Right cardiac atrium (tissue), 5 donors: ENCODE measurements at regions of chr2 and their contacts with region 1.

Region 1: DNA sequence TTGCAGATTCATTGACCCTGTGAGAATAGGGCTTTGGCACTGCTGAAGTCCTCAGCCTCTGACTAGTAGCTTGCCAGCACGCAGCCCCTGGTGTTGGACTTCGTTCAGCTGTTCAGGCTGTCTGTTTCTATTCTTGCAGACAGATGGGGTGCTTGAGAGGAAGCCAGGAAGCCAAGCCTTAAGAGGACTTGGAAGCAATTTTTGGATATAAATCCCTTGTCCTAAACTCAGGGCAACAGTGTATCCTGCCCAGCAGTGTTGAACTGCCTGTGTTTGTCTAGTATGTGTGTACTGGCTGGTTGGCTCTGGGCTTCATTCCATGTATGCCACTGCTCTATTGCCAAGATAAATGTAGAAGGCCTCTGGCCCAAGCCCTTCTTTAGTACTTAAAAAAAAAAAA is 108.6 kb downstream of the COMMD1 start:
- DNase-seq: peak; percentile 73 to 90 (median 83)
- ATAC-seq: peak; percentile 97 to 99
- H3K4me3 ChIP-seq: no peak overlapping the region
- H3K27ac ChIP-seq: peak overlapping the region; percentile 15
- H3K4me1 ChIP-seq: peaks cover 4% of the 10 kb centered on the region
- H3K27me3 ChIP-seq: no peaks in the 10 kb centered on the region

Region 2: GRCh38 chr2:61926531-61927477 is 87.3 kb before region 1 on chr2:
- intact Hi-C with region 1: no loop called
- DNase-seq: no peak
- ATAC-seq: no peak
- H3K4me3 ChIP-seq: no peak overlapping the region
- H3K27ac ChIP-seq: no peak overlapping the region
- H3K4me1 ChIP-seq: peaks cover 4% of the 10 kb centered on the region
- H3K27me3 ChIP-seq: no peaks in the 10 kb centered on the region

Region 3: DNA sequence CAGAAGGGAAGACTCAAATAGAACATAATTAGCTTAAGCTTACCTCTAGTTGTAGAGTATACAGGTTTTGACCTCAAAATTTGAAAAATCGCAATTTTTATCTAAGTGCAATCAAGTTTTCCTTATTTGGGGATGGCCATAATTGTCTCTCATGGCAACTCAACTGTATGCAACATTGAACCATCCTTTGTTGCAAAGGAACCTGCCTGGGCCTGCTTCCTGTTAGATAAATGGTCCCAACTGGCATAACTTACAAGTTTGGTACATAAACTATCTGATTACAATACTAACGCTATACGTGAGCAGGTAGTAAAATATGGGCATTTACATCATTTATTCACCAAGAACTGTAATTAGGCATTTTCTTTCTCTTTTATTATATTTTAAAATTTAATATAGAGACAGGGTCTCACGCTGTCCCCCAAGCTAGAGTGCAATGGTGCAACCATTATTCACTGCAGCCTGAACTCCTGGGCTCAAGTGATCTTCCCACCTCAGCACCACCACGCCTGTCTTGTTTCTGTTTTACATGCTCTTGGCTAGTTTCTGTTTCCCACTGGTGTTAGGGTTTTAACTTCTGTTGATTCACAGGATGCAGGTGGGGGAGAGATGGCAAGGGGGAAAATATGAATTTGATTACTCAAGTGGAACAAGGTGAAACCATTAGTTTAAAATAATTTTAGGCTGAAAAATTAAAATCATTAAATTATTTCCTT is 126.5 kb after region 1 on chr2:
- intact Hi-C with region 1: no loop called
- DNase-seq: no peak
- ATAC-seq: no peak
- H3K4me3 ChIP-seq: no peak overlapping the region
- H3K27ac ChIP-seq: no peak overlapping the region
- H3K4me1 ChIP-seq: no peaks in the 10 kb centered on the region
- H3K27me3 ChIP-seq: no peaks in the 10 kb centered on the region

Region 4: DNA sequence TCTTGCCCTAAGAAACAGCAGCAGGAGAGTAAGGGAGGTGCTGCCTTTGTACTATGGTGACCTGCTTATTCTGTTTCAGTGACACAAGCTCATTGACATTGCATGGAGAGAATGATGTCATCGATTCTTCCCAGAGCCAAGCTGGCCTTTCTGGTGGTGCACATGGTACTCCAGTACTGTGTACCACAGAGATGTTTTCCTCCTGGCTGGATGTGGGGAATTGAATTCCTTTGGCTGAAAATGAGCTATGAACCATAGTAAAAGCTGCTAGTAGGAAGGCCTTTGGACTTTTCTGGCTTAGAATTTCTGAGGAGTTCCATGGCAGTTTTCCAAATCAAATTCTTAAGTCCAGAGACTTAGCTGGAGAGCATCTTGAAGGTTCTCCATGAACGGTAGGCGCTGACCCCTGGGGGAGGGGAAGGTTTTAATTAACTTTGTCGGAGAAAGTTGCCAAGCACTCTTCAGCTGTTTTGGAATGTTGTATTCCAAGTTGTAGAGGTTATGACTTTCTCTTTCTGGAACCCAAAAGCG is 164.7 kb after region 1 on chr2:
- intact Hi-C with region 1: loop called in 2 of 4 experiments (anchors 10 kb)
- DNase-seq: peak in 2 of 3 donors; percentile 23 to 78
- ATAC-seq: peak; percentile 72 to 74
- H3K4me3 ChIP-seq: no peak overlapping the region
- H3K27ac ChIP-seq: peak overlapping the region; percentile 74
- H3K4me1 ChIP-seq: peaks cover 10% of the 10 kb centered on the region
- H3K27me3 ChIP-seq: no peaks in the 10 kb centered on the region

Region 5: DNA sequence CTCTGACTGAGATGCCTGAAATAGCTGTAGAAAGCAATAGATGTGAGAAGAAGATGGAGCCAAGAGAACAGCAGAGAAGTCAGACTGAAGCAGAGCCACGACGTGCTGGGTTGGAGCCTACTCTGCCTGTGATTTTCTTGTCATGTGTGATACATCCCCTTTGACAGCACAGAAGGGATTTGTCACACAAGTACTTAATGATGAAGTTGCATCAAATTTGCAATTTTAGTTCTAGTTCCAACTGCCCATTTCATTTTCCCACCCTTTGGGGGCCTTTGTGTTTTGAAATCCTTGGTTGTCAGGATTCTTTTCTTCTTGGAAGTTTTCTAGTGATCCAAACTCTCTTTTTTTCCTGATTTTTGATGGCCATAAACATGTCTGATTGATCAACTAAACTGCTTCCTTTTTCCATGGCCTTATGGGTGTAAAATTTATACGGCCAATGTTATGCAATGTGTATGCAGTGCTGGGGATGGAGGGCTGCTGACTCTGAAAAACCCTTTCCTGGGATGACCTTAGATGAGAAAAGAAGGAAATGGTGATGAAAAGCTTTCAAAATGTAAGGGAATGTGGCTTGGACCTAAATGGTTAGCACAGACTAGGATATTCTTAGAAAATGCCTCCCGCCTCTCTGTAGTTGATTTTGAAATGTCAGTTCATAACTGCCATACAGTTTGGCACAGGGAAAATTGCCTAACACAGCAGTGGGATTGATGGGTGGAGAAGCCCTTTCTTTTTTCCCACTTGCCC is 172.2 kb after region 1 on chr2:
- intact Hi-C with region 1: loop called in 2 of 4 experiments (anchors 10 kb)
- DNase-seq: no peak
- ATAC-seq: peak; percentile 61 to 72
- H3K4me3 ChIP-seq: no peak overlapping the region
- H3K27ac ChIP-seq: peak overlapping the region; percentile 41
- H3K4me1 ChIP-seq: peaks cover 20% of the 10 kb centered on the region
- H3K27me3 ChIP-seq: no peaks in the 10 kb centered on the region